ENCODE measurements at regions of chr12 and their contacts with region 1.

Region 1: DNA sequence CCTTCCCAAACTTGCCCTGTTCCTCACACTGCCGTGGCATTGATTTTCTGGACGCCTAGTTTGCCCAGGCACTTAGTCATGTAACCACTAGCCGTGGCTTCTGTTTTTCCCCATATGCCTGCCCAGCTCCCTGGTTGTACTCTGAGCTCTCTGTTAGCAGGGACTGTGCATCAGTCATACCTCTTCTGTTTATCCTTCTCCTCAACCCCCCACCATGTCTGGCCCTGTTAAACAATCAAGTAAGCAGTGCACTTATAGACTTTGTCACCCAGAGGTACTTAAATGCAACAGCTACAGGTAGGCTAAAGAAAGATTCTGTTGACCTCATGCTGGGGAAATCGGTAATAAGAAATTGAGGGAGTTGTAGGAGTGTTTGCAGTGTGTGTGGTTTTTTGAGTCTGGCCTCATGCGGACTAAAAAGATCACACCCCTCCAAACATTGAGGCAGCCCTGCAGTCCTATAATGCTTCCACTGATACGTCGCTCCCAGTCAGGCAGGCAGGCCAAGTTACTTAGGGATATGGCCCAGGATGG is 17.0 kb downstream of the UBE3B start:
- DNase-seq: no peak
- ATAC-seq: peak; percentile 71
- H3K4me3 ChIP-seq: no peak overlapping the region
- H3K27ac ChIP-seq: no peak overlapping the region
- H3K4me1 ChIP-seq: no peaks in the 10 kb centered on the region
- H3K27me3 ChIP-seq: no peaks in the 10 kb centered on the region
- CTCF ChIP-seq: no peak

Region 2: GRCh38 chr12:109222496-109222895 is 271.9 kb before region 1 on chr12:
- CTCF ChIA-PET with region 1: no interaction called
- POLR2A ChIA-PET with region 1: no interaction called
- in situ Hi-C with region 1: no loop called
- intact Hi-C with region 1: no loop called
- DNase-seq: no peak
- ATAC-seq: no peak
- H3K4me3 ChIP-seq: no peak overlapping the region
- H3K27ac ChIP-seq: no peak overlapping the region
- H3K4me1 ChIP-seq: no peaks in the 10 kb centered on the region
- H3K27me3 ChIP-seq: no peaks in the 10 kb centered on the region
- CTCF ChIP-seq: no peak

Region 3: DNA sequence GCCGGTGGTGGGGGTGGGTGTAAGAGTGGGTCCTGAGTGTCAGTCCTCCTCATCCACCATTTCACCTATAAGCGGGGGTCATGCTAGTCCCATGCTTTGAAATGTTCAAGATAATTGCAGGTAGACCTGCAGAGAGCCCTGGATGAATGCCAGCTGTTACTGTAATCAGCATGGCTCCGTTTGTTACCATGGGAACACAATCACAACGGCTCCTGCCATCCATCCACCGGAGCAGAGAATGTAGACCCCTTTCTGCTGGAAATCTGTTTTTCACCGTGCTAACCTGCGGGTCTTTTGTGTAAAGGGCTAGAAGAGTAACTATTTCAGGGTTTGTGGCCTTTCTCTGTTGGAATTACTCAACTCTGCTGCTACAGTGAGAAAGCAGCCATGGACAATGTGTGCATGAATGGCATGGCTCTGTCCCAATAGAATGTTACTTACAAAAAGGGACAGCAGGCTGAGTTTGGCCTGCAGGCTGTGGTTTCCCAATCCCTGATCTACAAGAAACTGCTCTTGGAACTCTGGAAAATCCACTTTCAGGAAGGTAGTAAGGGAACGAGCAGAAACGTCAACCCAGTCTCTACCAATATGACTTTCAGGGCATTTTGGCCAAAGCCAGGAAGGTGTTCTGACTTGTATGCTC is 53.4 kb before region 1 on chr12:
- CTCF ChIA-PET with region 1: interaction called, 17 read pairs
- POLR2A ChIA-PET with region 1: no interaction called
- in situ Hi-C with region 1: no loop called
- intact Hi-C with region 1: no loop called
- DNase-seq: no peak
- ATAC-seq: no peak
- H3K4me3 ChIP-seq: no peak overlapping the region
- H3K27ac ChIP-seq: no peak overlapping the region
- H3K4me1 ChIP-seq: no peaks in the 10 kb centered on the region
- H3K27me3 ChIP-seq: no peaks in the 10 kb centered on the region
- CTCF ChIP-seq: no peak

Region 4: DNA sequence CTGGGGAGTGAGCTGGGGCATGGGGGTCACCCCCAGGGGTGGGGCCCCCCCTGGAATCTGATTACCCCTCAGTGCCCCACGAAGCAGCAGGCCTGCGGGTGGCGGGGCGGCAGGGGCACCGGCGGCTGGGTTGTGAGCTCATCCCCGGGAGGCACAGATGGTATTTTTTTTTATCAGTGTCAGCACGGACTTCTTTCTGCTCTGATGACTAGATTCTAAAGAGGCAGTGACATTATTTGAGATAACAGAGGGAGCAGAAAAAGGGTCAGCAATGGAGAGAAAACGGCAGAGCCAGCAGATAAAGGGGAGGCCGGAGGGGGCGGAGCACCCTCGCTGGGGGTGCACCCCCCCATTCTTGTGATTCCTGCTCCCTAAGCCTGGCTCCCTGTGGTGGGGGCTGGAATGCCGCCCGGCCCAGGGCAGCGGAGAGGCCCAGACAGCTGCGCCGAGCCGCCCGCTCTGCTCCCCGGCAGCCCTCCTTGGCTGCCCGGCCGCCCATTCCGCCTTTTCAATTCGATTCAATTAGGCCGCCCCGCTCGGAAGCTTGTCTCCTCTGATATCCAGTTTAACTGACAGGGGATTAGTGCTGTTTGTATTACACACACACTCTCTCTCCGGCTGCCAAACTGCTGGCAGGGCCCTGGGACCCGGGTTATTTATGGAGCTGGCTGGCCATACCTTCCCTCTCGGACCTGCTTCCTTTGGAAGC is 112.1 kb after region 1 on chr12:
- CTCF ChIA-PET with region 1: no interaction called
- POLR2A ChIA-PET with region 1: no interaction called
- in situ Hi-C with region 1: no loop called
- intact Hi-C with region 1: no loop called
- DNase-seq: no peak
- ATAC-seq: peak; percentile 27; the same call in 1 of the 2 replicates
- H3K4me3 ChIP-seq: no peak overlapping the region
- H3K27ac ChIP-seq: no peak overlapping the region
- H3K4me1 ChIP-seq: no peaks in the 10 kb centered on the region
- H3K27me3 ChIP-seq: no peaks in the 10 kb centered on the region
- CTCF ChIP-seq: no peak

Measured in Panc1 (cell line).